ENCODE measurements at regions of chr11 and their contacts with region 1.

Region 1: GRCh38 chr11:96188243-96189006 is 154.6 kb downstream of the MAML2 start:
- DNase-seq: peak; percentile 79
- H3K4me3 ChIP-seq: no peak overlapping the region
- H3K27ac ChIP-seq: peak overlapping the region; percentile 91
- H3K4me1 ChIP-seq: peaks cover 34% of the 10 kb centered on the region
- H3K27me3 ChIP-seq: no peaks in the 10 kb centered on the region
- CTCF ChIP-seq: no peak

Region 2: GRCh38 chr11:96114178-96115064 is 74.0 kb before region 1 on chr11:
- CTCF ChIA-PET with region 1: no interaction called
- dilution Hi-C with region 1: loop called (anchors 5 kb)
- in situ Hi-C with region 1: no loop called
- intact Hi-C with region 1: no loop called
- DNase-seq: peak; percentile 40
- H3K4me3 ChIP-seq: no peak overlapping the region
- H3K27ac ChIP-seq: no peak overlapping the region
- H3K4me1 ChIP-seq: peaks cover 25% of the 10 kb centered on the region
- H3K27me3 ChIP-seq: no peaks in the 10 kb centered on the region
- CTCF ChIP-seq: no peak

Region 3: GRCh38 chr11:96155627-96156378 is 32.6 kb before region 1 on chr11:
- CTCF ChIA-PET with region 1: no interaction called
- dilution Hi-C with region 1: no loop called
- in situ Hi-C with region 1: no loop called
- intact Hi-C with region 1: loop called (anchors 2 kb)
- DNase-seq: peak; percentile 93
- H3K4me3 ChIP-seq: no peak overlapping the region
- H3K27ac ChIP-seq: peak overlapping the region; percentile 92
- H3K4me1 ChIP-seq: peaks cover 41% of the 10 kb centered on the region
- H3K27me3 ChIP-seq: no peaks in the 10 kb centered on the region
- CTCF ChIP-seq: peak in 1 of 2 donors; percentile 34

Region 4: GRCh38 chr11:96168623-96169022 is 19.8 kb before region 1 on chr11:
- CTCF ChIA-PET with region 1: no interaction called
- dilution Hi-C with region 1: no loop called
- in situ Hi-C with region 1: no loop called
- intact Hi-C with region 1: loop called (anchors 2 kb)
- DNase-seq: peak; percentile 83
- H3K4me3 ChIP-seq: no peak overlapping the region
- H3K27ac ChIP-seq: peak overlapping the region; percentile 73
- H3K4me1 ChIP-seq: peaks cover 19% of the 10 kb centered on the region
- H3K27me3 ChIP-seq: no peaks in the 10 kb centered on the region
- CTCF ChIP-seq: peak in 1 of 2 donors; percentile 9

Region 5: GRCh38 chr11:96207459-96208449 is 19.3 kb after region 1 on chr11:
- CTCF ChIA-PET with region 1: no interaction called
- dilution Hi-C with region 1: no loop called
- in situ Hi-C with region 1: no loop called
- intact Hi-C with region 1: loop called (anchors 2 kb)
- DNase-seq: peak; percentile 89
- H3K4me3 ChIP-seq: no peak overlapping the region
- H3K27ac ChIP-seq: peak overlapping the region; percentile 67
- H3K4me1 ChIP-seq: peaks cover 28% of the 10 kb centered on the region
- H3K27me3 ChIP-seq: no peaks in the 10 kb centered on the region
- CTCF ChIP-seq: peak in 1 of 2 donors; percentile 18

Region 6: DNA sequence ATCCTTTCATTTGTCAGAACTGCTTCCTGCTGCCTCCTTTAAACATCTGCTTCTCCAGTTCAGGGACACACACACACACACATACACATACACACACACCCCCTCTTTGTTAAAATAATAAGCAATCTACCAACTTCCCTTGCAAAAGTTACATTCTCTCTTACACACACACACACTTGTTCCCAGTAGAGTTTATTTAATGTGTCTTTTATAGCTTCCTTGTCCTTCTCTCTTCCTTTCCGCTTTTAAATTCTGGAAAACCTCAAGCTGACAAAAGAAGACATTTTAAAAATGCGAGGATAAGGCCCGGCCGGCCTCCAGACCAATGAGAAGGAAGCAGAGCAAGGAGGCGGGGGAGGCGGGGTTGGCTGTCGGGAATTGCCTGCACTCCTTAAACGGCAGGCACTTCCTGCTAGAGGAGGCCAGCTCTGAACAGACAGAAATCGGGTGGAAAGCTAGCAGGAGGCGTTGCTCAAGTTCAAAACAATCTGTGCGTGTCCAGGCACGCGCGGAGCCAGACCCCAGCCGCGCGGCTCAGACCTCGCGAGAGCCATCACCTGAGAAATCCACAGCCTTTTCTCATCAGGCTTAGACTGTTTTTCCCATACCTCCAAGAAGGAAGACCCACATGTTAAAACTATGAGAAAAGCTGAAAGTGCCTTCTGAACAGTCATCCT is 54.7 kb after region 1 on chr11:
- CTCF ChIA-PET with region 1: interaction called, 22 read pairs
- dilution Hi-C with region 1: no loop called
- in situ Hi-C with region 1: no loop called
- intact Hi-C with region 1: no loop called
- DNase-seq: peak; percentile 92
- H3K4me3 ChIP-seq: peak overlapping the region; percentile 25 to 31 (median 30)
- H3K27ac ChIP-seq: peak overlapping the region; percentile 74
- H3K4me1 ChIP-seq: peaks cover 40% of the 10 kb centered on the region
- H3K27me3 ChIP-seq: no peaks in the 10 kb centered on the region
- CTCF ChIP-seq: no peak

Region 7: GRCh38 chr11:96257972-96258934 is 69.8 kb after region 1 on chr11:
- CTCF ChIA-PET with region 1: no interaction called
- dilution Hi-C with region 1: loop called (anchors 5 kb)
- in situ Hi-C with region 1: no loop called
- intact Hi-C with region 1: no loop called
- DNase-seq: no peak
- H3K4me3 ChIP-seq: peak overlapping the region in 2 of 3 experiments; percentile 4 to 30
- H3K27ac ChIP-seq: peak overlapping the region; percentile 53
- H3K4me1 ChIP-seq: peaks cover 54% of the 10 kb centered on the region
- H3K27me3 ChIP-seq: no peaks in the 10 kb centered on the region
- CTCF ChIP-seq: no peak

Measured in mammary epithelial cell (primary cell).